Mammary epithelial cell (primary cell): ENCODE measurements at regions of chr1 and their contacts with region 1.

Region 1: GRCh38 chr1:21238141-21238800 is 52.0 kb downstream of the ECE1 start:
- DNase-seq: peak; percentile 82
- H3K4me3 ChIP-seq: no peak overlapping the region
- H3K27ac ChIP-seq: no peak overlapping the region
- H3K4me1 ChIP-seq: peaks cover 18% of the 10 kb centered on the region
- H3K27me3 ChIP-seq: no peaks in the 10 kb centered on the region
- CTCF ChIP-seq: no peak

Region 2: DNA sequence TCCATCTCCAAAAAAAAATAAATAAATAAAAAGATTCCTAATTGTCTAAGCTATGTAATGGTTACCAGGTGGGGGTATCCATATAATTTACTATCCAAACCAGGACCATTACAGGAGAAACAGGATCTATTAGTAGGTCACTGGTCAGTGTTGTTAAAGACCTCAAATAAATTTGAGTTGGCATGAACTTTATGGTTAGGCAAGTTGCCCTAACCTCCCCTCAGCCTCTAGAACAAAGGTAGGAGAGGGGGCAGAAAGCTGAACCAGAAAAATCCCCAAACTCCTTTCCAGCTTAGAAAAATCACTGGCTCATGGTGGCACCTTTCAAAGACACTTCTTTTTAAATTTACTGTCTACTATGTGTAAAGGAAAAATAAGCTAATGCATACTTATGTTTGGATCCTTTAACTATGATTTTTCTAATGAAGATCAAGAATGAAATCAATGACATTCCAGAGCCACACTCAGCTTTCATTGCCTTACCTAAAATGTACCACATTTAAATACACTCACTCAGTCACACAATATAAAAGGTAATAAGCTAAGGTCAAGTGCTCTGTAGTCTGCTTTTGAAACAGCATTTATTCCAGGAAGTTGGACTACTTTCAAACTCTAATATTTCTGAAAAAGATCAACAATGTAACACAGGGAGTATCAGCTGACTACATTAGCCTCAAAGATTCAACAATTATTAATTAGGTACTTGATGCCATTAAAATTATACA is 75.4 kb before region 1 on chr1:
- CTCF ChIA-PET with region 1: no interaction called
- dilution Hi-C with region 1: loop called (anchors 5 kb)
- in situ Hi-C with region 1: no loop called
- intact Hi-C with region 1: no loop called
- DNase-seq: no peak
- H3K4me3 ChIP-seq: no peak overlapping the region
- H3K27ac ChIP-seq: no peak overlapping the region
- H3K4me1 ChIP-seq: no peaks in the 10 kb centered on the region
- H3K27me3 ChIP-seq: no peaks in the 10 kb centered on the region
- CTCF ChIP-seq: no peak